ENCODE measurements at regions of chr16 and their contacts with region 1.

Region 1: GRCh38 chr16:78235168-78235800 is 135.8 kb downstream of the WWOX start:
- H3K4me3 Mint-ChIP-seq: no peak overlapping the region
- H3K27ac Mint-ChIP-seq: no peak overlapping the region
- H3K4me1 Mint-ChIP-seq: no peaks in the 10 kb centered on the region
- H3K27me3 Mint-ChIP-seq: no peaks in the 10 kb centered on the region

Region 2: DNA sequence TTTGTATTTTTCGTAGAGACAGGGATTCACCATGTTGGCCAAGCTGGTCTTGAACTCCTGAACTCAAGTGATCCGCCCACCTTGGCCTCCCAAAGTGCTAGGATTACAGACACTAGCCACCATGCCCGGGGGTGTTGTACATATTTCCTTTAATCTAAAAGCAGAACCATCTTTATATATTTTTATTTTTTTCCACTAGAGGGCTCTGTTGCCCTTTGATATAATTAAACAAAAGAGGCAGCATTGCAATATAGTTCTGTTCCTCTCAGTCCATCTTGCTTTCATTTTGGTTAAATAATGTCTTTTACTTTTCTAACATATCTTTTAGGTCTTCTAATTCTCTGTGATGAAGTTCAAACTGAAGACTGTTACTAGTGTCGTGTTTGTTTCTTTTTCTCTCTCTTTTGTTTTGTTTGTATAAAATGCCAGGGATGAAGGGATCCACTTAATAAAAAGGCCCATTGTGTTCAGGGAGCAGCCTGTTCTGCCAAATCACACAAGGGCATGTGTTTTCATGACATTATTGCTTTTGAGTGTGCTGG is 112.4 kb before region 1 on chr16:
- intact Hi-C with region 1: loop called (anchors 1 kb)
- H3K4me3 Mint-ChIP-seq: no peak overlapping the region
- H3K27ac Mint-ChIP-seq: no peak overlapping the region
- H3K4me1 Mint-ChIP-seq: peaks cover 5% of the 10 kb centered on the region
- H3K27me3 Mint-ChIP-seq: no peaks in the 10 kb centered on the region

Region 3: GRCh38 chr16:78209951-78210661 is 25.2 kb before region 1 on chr16:
- intact Hi-C with region 1: no loop called
- H3K4me3 Mint-ChIP-seq: no peak overlapping the region
- H3K27ac Mint-ChIP-seq: no peak overlapping the region
- H3K4me1 Mint-ChIP-seq: no peaks in the 10 kb centered on the region
- H3K27me3 Mint-ChIP-seq: no peaks in the 10 kb centered on the region